ENCODE measurements at regions of chr3 and their contacts with region 1.

Region 1: DNA sequence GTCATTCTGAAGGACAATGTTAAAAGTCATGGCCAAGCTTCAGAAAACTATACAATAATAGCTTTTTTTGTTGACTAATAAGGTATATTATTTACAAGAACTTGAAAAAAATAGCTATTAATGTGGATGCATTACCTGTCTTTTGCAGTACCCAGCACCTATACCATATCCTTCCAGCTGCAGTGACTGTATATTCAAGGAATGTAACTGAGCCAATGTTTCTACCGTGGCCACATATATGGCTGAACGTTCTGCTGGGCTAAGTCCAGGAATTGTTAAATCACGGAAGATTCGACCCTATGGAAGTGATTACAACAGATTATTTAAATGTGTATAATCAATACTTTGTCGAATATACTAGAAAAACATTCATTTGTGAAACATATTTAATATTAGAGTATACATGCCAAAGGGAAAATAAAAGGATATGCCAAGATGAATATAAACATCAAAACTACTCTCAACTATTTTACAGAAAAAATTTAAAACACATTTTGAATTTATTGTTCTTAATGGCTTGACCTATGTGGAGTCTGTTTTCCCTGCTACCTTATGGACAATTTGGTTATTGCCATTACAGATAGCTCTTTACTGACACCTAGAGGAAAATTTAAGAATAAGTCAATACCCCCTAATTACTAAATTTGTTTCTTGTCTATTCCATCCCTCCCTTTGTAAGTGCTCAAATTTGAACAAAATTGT is 17.6 kb downstream of the ACAD11 start:
- DNase-seq: no peak
- H3K4me3 ChIP-seq: no peak overlapping the region
- H3K27ac ChIP-seq: no peak overlapping the region
- H3K4me1 ChIP-seq: peaks cover 0 to 3% of the 10 kb centered on the region in 2 donors
- H3K27me3 ChIP-seq: no peaks in the 10 kb centered on the region
- CTCF ChIP-seq: peak; percentile 74 to 83 (median 80)

Region 2: DNA sequence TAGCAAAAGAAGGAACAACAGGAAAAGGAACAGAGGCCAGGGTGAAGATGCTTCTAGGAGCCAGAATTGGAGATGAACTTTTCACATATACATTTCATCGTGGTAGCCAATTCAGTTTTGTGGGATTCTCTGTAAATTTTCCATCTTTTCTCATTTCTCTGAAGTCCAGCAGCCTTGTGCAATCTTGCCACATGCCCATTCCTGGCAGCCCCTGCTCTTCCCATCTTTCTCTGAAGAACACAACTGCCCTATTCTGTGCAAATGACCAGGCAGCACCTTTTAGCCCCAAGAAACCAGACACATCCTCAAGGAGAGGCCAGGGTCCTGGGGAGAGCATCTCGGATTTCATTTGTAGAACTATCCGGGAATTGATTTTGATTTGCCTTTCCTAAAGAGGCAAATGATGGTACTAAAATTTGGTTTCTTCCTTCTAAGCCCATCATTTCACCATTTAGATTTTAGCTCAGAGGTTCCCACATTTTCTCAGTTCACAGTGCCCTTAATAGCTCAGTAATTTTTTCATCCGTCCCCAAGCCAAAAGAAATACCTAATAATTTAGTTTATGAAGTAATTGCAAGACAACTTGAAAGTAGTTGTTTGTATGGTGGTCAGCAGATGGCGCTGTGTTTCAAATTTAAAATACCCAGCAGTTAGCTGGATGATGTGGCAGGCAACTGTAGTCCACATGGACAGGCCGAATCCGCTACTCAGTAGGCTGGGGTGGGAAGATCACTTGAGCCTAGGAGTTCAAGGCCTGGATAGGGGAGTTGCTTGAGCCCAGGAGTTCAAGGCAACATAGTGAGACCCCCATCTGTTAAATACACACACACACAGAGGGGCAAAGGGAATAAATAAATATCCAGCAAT is 106.2 kb before region 1 on chr3:
- intact Hi-C with region 1: loop called (anchors 1 kb)
- DNase-seq: peak in 1 of 2 donors; percentile 86
- H3K4me3 ChIP-seq: no peak overlapping the region
- H3K27ac ChIP-seq: peak overlapping the region; percentile 31 to 61
- H3K4me1 ChIP-seq: peaks cover 0 to 4% of the 10 kb centered on the region in 2 donors
- H3K27me3 ChIP-seq: no peaks in the 10 kb centered on the region
- CTCF ChIP-seq: peak; percentile 58 to 76 (median 69)

Measured in ascending aorta (tissue), 2 donors.